ENCODE measurements at regions of chr20 and their contacts with region 1.

Region 1: GRCh38 chr20:25216199-25216945 is 20.9 kb downstream of the ENTPD6 start:
- DNase-seq: no peak
- ATAC-seq: no peak
- H3K4me3 Mint-ChIP-seq: no peak overlapping the region
- H3K27ac Mint-ChIP-seq: no peak overlapping the region
- H3K4me1 Mint-ChIP-seq: no peaks in the 10 kb centered on the region
- H3K27me3 Mint-ChIP-seq: no peaks in the 10 kb centered on the region

Region 2: DNA sequence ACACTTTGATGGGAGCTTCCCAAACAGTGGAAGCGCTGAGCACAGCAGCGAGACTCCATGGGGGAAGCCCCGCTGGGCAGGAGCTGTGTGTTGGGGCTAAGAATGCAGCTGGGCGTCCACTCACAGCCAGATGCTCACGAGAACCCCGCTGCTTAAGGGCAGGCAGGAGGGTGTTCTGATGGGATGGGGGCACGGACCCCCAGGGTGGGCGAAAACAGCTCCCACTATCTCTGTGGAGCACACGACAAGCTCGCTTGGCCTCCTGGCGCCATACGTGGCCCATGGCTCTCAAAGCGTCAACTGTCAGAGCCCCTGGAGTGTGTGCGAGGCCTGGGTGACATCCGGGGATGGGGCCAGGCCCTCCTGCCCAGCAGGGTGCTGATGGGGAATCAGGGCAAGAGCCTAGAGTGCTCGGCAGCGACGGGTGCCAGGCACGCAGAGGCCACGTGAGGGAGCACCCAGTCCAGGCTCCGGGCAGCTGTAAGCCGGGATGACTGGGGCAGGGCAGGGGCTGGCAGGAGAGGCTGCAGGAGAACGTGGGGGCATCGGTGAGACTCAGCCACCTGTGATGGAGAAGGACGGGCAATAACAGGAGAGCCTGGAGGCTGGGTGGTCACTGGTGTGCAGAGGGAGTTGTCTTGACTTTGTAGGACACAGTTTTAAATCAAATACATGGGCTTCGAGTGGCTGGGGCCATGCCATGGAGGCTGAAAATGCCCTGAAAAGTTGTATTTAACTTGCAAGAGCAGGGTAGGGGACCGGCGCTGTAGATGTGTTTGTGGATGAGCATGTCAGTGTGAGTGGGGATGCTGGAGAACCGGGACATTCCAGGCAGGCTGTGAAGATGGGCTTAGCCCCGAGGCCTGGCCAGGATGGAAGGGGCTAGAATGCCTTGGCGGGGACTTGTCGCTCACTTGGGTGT is 58.8 kb after region 1 on chr20:
- CTCF ChIA-PET with region 1: no interaction called
- POLR2A ChIA-PET with region 1: no interaction called
- intact Hi-C with region 1: loop called in 1 of 2 experiments (anchors 5 kb)
- DNase-seq: peak; percentile 3
- ATAC-seq: no peak
- H3K4me3 Mint-ChIP-seq: no peak overlapping the region
- H3K27ac Mint-ChIP-seq: no peak overlapping the region
- H3K4me1 Mint-ChIP-seq: no peaks in the 10 kb centered on the region
- H3K27me3 Mint-ChIP-seq: no peaks in the 10 kb centered on the region